Activated CD4-positive, alpha-beta T cell treated with anti-CD3 and anti-CD28 coated beads, Interleukin-2, amount 10 ng/mL, durations not matched to agents 24 days and 14 days (primary cell): ENCODE measurements at regions of chr11 and their contacts with region 1.

Region 1: GRCh38 chr11:35272391-35272902 is 133.5 kb downstream of the CD44 start:
- DNase-seq: peak; percentile 86
- H3K4me3 Mint-ChIP-seq: peak overlapping the region; percentile 16
- H3K27ac Mint-ChIP-seq: peak overlapping the region; percentile 87
- H3K4me1 Mint-ChIP-seq: peaks cover 60% of the 10 kb centered on the region
- H3K27me3 Mint-ChIP-seq: peaks cover 2% of the 10 kb centered on the region

Region 2: DNA sequence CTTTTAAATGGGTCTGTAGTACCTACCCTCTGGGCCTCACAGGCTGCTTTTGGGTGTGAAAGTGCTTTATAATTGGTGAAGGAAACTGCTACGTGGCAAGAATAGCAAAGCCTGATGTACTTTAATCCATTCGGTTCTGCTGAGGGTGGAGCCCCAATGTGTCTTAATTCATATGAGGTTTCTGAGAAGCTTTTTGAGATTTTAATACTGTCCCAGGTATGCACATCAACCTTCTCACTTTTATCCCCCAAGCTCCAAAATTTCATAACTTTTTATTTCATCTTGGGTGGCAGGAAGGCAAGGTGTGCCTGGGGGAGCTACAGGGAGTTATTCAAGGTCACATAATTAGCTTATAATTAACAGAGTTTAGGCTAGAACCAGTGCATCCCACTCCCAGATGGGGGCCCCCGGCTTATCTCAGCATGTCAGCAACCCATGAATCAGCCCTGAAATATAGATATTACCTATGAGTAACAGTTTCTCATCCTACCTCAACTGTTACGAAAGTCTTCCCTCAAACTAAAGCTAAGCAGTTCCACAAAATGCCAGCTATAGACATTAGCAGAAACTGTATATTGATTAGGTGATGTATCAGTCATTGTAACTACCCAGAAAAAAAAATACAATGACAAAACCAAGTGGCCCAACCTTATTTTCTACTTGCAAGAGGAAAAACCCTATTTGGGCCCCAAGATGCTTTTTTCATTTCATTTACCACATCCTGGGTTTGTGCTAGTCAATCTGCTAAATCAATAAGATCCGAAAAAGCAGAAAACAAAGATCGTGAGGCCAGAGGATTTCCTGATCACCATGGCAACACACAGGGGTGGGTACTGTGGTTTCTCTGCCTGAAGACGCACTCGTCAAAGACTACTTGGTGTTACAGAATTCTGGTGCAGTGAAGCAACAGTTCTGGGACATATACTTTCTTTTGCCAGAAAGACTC is 106.8 kb before region 1 on chr11:
- intact Hi-C with region 1: loop called (anchors 2 kb)
- DNase-seq: peak; percentile 98
- H3K4me3 Mint-ChIP-seq: peak overlapping the region; percentile 78
- H3K27ac Mint-ChIP-seq: peak overlapping the region; percentile 99
- H3K4me1 Mint-ChIP-seq: peaks cover 93% of the 10 kb centered on the region
- H3K27me3 Mint-ChIP-seq: no peaks in the 10 kb centered on the region

Region 3: DNA sequence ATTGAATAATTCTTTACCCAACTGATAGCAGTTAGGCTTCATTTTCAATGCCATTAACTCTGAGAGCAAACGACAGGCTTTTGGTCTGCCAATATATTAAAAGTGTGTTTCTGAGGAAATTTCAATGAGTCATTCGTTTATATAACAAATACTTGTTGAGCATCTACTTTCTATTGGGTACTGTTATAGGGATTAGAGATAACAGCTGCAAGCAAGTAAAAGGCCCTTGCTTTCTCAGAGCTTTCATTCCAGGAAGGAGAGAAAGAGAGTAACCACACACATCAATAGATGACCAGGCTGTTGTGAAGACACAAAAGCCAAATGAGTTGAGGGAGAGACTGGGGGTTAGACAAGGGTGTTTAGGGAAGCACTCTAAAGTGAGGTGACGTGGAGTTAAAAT is 97.8 kb before region 1 on chr11:
- intact Hi-C with region 1: loop called (anchors 2 kb)
- DNase-seq: peak; percentile 69
- H3K4me3 Mint-ChIP-seq: peak overlapping the region; percentile 57
- H3K27ac Mint-ChIP-seq: peak overlapping the region; percentile 85
- H3K4me1 Mint-ChIP-seq: peaks cover 85% of the 10 kb centered on the region
- H3K27me3 Mint-ChIP-seq: no peaks in the 10 kb centered on the region

Region 4: GRCh38 chr11:35237860-35238715 is 34.4 kb before region 1 on chr11:
- intact Hi-C with region 1: loop called (anchors 5 kb)
- DNase-seq: peak; percentile 88
- H3K4me3 Mint-ChIP-seq: peak overlapping the region; percentile 33
- H3K27ac Mint-ChIP-seq: no peak overlapping the region
- H3K4me1 Mint-ChIP-seq: peaks cover 69% of the 10 kb centered on the region
- H3K27me3 Mint-ChIP-seq: peaks cover 7% of the 10 kb centered on the region

Region 5: DNA sequence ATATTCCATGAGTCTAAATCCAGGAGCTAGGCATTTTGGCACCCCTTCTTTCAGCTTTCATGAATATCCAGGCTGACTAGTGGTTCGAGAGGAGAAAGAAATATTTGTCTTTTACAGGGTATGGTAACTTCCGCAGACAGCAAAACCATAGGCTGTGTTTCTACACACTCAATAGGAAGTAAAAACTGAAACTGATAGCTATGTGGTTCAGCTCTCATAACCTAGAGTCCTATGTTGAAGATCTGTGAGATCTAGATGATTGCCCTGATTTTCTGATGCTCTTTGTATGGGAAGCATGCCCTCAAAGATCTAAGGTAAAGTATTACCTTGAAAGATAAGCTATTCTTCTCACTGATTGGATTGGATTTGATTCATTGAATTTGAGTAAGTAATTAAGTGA is 15.2 kb before region 1 on chr11:
- intact Hi-C with region 1: loop called (anchors 2 kb)
- DNase-seq: peak; percentile 71
- H3K4me3 Mint-ChIP-seq: peak overlapping the region; percentile 9
- H3K27ac Mint-ChIP-seq: no peak overlapping the region
- H3K4me1 Mint-ChIP-seq: peaks cover 14% of the 10 kb centered on the region
- H3K27me3 Mint-ChIP-seq: peaks cover 36% of the 10 kb centered on the region

Region 6: GRCh38 chr11:35288817-35289541 is 16.5 kb after region 1 on chr11:
- intact Hi-C with region 1: loop called (anchors 1 kb)
- DNase-seq: no peak
- H3K4me3 Mint-ChIP-seq: peak overlapping the region; percentile 19
- H3K27ac Mint-ChIP-seq: peak overlapping the region; percentile 70
- H3K4me1 Mint-ChIP-seq: peaks cover 29% of the 10 kb centered on the region
- H3K27me3 Mint-ChIP-seq: no peaks in the 10 kb centered on the region

Region 7: GRCh38 chr11:35343033-35343598 is 70.7 kb after region 1 on chr11:
- intact Hi-C with region 1: loop called (anchors 1 kb)
- DNase-seq: peak; percentile 92
- H3K4me3 Mint-ChIP-seq: peak overlapping the region; percentile 68
- H3K27ac Mint-ChIP-seq: peak overlapping the region; percentile 89
- H3K4me1 Mint-ChIP-seq: peaks cover 37% of the 10 kb centered on the region
- H3K27me3 Mint-ChIP-seq: peaks cover 3% of the 10 kb centered on the region